ENCODE measurements at regions of chr19 and their contacts with region 1.

Region 1: DNA sequence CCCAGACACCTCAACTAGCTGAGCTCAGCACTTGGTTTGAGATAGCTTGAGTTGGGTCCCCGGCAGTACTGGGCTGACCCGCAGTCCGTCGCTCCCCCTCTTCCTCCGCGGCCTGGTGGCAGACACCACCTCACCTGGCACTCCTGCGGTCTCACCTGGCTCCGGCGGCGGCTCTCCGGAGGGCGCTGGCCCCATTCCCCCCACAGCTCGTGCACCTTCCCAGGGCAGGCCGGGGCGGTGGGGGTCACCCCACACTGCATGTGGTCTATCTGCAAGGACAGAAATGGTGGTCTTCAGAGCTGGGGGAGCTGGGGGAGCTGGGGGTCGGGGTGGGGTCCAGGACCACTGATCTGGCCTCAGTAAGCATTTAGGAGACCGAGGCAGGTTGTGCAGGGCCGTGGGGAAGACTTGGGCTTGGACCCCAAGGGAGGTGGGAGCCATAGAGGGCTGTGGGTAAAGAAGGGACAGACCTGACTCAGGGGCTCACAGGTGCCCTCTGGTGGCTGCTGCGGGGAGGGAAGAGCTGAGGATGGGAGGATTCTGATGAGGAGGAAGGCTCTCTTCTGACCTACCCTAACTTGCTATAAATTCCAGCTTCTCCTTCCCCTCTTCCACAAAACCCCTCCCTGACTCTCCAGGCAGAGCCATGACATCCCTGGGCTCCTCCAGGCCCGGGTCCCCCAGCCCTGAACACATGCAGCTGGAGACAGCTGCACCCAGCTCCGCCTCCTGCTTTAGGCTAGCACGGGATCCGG is 6.7 kb upstream of the PLIN4 start:
- DNase-seq: peak; percentile 33
- ATAC-seq: peak; percentile 80
- H3K4me3 ChIP-seq: no peak overlapping the region
- H3K27ac ChIP-seq: no peak overlapping the region
- H3K4me1 ChIP-seq: no peaks in the 10 kb centered on the region
- H3K27me3 ChIP-seq: no peaks in the 10 kb centered on the region
- CTCF ChIP-seq: peak; percentile 89

Region 2: DNA sequence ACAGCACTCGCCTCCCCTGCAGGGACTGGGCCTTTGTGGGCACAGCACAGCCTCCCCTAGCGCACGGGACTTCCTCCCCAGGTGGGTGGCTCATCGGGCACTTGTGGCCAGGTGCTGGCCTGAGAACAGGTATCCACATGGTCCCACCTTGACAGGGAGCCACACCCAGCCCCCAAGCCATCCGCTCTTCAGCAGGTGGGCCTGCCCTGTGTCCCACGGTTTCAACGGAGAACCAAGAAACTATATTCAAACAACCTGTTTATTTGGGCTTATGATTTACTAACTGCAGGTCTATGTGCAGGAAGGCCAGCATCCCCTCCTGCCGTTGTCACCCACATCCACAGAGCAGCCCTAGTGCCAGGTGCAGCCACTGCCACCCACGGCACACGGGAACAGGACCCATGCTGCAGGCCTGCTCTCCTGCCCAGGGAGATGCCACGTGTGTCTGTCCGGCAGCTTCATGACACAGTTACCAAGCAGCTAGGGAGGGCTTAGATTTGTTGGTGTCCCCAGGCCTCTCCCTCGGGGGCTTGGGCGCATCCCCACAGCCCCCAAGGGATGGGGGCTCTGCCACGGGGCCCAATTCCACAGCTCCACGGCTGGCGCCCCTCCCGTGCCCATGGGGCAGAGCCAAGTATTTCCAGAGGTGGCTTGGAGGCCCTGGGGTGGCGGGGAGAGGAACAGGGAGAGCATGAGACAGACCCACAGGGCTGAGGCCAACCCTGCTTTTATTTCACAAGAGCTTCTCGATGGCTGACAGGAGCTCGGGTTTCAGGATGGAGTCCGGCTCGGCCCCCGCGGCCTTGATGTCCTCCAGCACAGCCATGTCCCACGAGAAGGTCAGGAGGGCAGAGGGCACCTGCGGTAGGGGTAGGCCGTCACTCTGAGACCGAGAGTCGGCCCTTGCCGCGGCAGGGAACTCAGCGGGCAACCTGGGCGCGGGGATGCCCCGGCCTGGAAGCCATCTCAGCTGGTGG is 79.9 kb before region 1 on chr19:
- CTCF ChIA-PET with region 1: no interaction called
- POLR2A ChIA-PET with region 1: no interaction called
- in situ Hi-C with region 1: no loop called
- intact Hi-C with region 1: no loop called
- DNase-seq: no peak
- ATAC-seq: 0 out of 2 replicates have a peak, but pooled peaks have one; percentile 15
- H3K4me3 ChIP-seq: no peak overlapping the region
- H3K27ac ChIP-seq: no peak overlapping the region
- H3K4me1 ChIP-seq: no peaks in the 10 kb centered on the region
- H3K27me3 ChIP-seq: no peaks in the 10 kb centered on the region
- CTCF ChIP-seq: no peak

Region 3: DNA sequence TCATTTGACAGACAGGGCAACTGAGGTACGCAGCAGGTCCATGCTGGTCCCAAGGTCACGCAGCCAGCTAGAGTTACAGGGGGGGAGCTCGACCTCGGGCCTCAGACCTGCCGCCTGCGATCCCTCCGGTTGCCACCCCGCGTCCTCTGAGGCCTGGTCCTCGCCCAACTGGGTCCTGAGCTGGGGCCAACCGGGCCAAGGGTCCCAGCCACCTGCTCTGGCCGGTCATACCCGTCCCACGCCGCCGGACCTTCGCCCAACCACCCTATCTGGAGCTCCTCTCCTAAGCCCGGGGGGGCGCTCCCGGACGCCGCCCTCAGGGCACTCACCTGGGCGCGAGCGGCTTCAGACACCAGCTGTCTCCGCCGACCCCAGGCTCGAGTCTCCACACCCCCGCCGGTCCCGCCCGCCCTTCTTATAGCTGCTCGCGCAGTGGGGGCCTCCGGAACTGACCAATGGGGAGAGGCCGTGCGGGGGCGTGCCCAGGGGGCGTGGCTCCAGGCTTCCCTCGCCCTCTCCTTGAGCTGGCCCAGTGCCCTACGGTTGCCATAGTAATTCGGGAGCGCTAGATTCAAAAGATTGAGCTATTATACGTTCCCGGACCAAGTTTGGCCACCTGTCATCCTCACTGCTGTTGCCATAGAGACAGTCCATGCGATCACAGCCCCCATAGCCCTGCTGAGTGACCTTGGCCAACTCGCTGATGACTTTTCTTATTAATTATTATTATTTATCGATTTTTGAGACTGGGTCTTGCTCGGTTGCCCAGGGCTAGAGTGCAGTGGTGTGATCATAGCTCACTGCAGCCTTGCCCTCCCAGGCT is 10.1 kb after region 1 on chr19 and contains the start of gene PLIN5:
- CTCF ChIA-PET with region 1: interaction called, 11 read pairs
- POLR2A ChIA-PET with region 1: no interaction called
- in situ Hi-C with region 1: no loop called
- intact Hi-C with region 1: no loop called
- DNase-seq: no peak
- ATAC-seq: peak; percentile 83
- H3K4me3 ChIP-seq: peak within 1 kb of the TSS; percentile 14 to 33; a peak in 3 of 4 replicates
- H3K27ac ChIP-seq: no peak within 1 kb of the TSS
- H3K4me1 ChIP-seq: peaks cover 5% of the 10 kb centered on the region; the same call in 1 of the 2 replicates
- H3K27me3 ChIP-seq: no peaks in the 10 kb centered on the region
- CTCF ChIP-seq: no peak
- total RNA-seq, gene PLIN5: 0.64 TPM

Region 4: DNA sequence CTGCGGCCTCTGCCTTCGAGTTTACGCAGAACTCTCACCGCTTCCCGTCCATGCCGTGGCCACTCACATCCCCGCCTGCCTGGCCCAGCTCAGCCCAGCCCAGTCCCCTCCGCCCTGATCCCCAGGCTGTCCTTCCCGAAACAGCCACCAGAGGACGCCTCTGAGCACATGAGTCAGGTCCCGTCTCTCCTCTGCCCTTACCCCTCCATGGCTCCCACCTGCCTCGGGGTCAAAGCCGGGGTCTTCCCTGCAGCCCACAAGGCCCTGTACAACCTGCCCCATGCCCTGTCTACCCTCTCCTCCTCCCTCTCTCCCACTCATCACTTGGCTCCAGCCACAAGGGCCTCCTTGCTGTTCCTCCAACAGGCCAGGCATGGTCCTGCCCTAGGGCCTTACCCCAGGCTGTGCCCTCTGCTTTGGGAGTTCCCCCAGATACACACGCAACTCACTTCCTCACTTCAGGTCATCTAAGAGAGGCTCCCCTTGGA is 42.6 kb after region 1 on chr19:
- CTCF ChIA-PET with region 1: interaction called, 11 read pairs
- POLR2A ChIA-PET with region 1: no interaction called
- in situ Hi-C with region 1: no loop called
- intact Hi-C with region 1: no loop called
- DNase-seq: no peak
- ATAC-seq: peak; percentile 88
- H3K4me3 ChIP-seq: no peak overlapping the region
- H3K27ac ChIP-seq: no peak overlapping the region
- H3K4me1 ChIP-seq: no peaks in the 10 kb centered on the region
- H3K27me3 ChIP-seq: no peaks in the 10 kb centered on the region
- CTCF ChIP-seq: peak; percentile 94

Region 5: GRCh38 chr19:4803736-4804695 is 279.0 kb after region 1 on chr19:
- CTCF ChIA-PET with region 1: no interaction called
- POLR2A ChIA-PET with region 1: no interaction called
- in situ Hi-C with region 1: no loop called
- intact Hi-C with region 1: no loop called
- DNase-seq: peak; percentile 39
- ATAC-seq: peak; percentile 84
- H3K4me3 ChIP-seq: no peak overlapping the region
- H3K27ac ChIP-seq: no peak overlapping the region
- H3K4me1 ChIP-seq: no peaks in the 10 kb centered on the region
- H3K27me3 ChIP-seq: no peaks in the 10 kb centered on the region
- CTCF ChIP-seq: peak; percentile 93